IMR-90 (cell line): ENCODE measurements at regions of chr5 and their contacts with region 1.

Region 1: GRCh38 chr5:4893063-4893744 is 246.9 kb upstream of the ADAMTS16 start:
- DNase-seq: no peak
- ATAC-seq: no peak
- H3K4me3 ChIP-seq: no peak overlapping the region
- H3K27ac ChIP-seq: no peak overlapping the region
- H3K4me1 ChIP-seq: no peaks in the 10 kb centered on the region
- H3K27me3 ChIP-seq: no peaks in the 10 kb centered on the region
- CTCF ChIP-seq: no peak
- POLR2A ChIP-seq: no peak
- RAD21 ChIP-seq: no peak

Region 2: DNA sequence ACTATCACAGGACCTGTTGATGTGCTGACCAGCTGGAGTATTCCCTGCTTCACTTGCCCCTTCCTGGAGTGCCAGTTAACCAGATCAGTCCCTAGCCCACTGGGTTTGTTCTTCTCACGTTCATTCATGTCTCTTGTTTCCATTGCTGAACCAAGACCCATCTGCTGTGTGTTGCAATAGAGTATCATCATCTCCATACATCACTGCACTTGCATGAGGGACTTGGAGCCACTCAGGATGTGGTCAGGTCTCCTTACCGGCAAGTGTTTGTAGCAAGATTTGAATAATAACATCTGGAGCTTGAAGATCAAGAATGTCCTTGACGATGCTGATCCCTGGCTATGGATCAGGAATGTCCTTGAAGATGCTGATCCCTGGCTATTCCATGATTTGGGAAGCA is 939.0 kb before region 1 on chr5:
- CTCF ChIA-PET with region 1: no interaction called
- POLR2A ChIA-PET with region 1: no interaction called
- dilution Hi-C with region 1: no loop called
- in situ Hi-C with region 1: no loop called
- intact Hi-C with region 1: no loop called
- DNase-seq: no peak
- ATAC-seq: no peak
- H3K4me3 ChIP-seq: no peak overlapping the region
- H3K27ac ChIP-seq: no peak overlapping the region
- H3K4me1 ChIP-seq: no peaks in the 10 kb centered on the region
- H3K27me3 ChIP-seq: no peaks in the 10 kb centered on the region
- CTCF ChIP-seq: no peak
- POLR2A ChIP-seq: no peak
- RAD21 ChIP-seq: no peak

Region 3: DNA sequence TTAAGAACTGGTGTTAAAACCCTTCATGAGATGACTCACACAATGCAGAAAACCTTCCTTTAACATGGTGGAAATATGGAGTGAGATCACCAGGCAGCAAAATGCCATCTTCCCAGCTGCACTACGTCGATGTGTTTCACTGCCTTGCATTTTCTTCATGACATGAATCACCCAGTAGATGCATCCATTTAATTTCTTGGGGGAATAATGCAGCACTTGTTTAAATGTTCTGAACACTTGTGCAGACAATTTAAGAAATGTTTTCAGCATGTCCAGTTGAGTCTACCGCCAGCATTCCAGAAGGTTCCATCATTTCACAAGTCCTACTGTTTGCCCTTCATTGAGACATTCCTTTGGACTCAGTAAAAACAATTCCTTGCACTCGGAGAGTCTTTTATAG is 328.5 kb after region 1 on chr5:
- CTCF ChIA-PET with region 1: no interaction called
- POLR2A ChIA-PET with region 1: no interaction called
- dilution Hi-C with region 1: no loop called
- in situ Hi-C with region 1: no loop called
- intact Hi-C with region 1: loop called (anchors 10 kb)
- DNase-seq: peak; percentile 13
- ATAC-seq: no peak
- H3K4me3 ChIP-seq: no peak overlapping the region
- H3K27ac ChIP-seq: no peak overlapping the region
- H3K4me1 ChIP-seq: no peaks in the 10 kb centered on the region
- H3K27me3 ChIP-seq: no peaks in the 10 kb centered on the region
- CTCF ChIP-seq: no peak
- POLR2A ChIP-seq: no peak
- RAD21 ChIP-seq: no peak